Activated naive CD4-positive, alpha-beta T cell treated with anti-CD3 and anti-CD28 coated beads for 36 hours (primary cell): ENCODE measurements at regions of chrX and their contacts with region 1.

Region 1: DNA sequence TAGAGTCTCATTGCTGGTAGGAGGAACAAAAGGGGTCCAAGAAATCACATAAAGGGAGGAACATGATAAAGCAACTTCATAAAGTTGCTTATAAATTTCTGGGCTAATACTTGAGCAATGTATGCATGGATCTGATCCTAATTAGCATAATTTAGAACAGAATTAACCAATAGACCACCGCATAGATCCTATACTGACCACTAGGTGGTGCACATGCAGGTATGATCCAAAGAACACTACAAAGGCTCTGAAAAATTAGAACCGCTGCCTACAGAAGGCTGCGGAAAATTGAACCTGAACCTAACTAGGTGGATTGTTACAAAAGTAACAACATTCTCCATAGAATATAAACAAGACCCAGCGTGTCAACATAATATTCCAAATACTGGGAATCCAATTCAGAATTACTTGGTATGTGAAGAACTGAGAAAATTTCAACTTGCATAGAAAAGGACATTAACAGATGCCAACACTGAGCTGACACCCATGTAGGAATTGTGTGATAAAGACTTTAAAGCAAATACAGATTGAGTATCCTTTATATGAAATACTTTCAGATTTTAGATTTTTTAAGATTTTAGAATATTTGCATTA is 23.3 kb downstream of the BRCC3 start:
- DNase-seq: peak; percentile 32
- H3K4me3 Mint-ChIP-seq: no peak overlapping the region
- H3K27ac Mint-ChIP-seq: no peak overlapping the region
- H3K4me1 Mint-ChIP-seq: no peaks in the 10 kb centered on the region
- H3K27me3 Mint-ChIP-seq: no peaks in the 10 kb centered on the region

Region 2: GRCh38 chrX:155132110-155132509 is 37.5 kb after region 1 on chrX:
- CTCF ChIA-PET with region 1: no interaction called
- intact Hi-C with region 1: no loop called
- DNase-seq: no peak
- H3K4me3 Mint-ChIP-seq: no peak overlapping the region
- H3K27ac Mint-ChIP-seq: no peak overlapping the region
- H3K4me1 Mint-ChIP-seq: no peaks in the 10 kb centered on the region
- H3K27me3 Mint-ChIP-seq: no peaks in the 10 kb centered on the region

Region 3: GRCh38 chrX:155148724-155149537 is 54.4 kb after region 1 on chrX:
- CTCF ChIA-PET with region 1: interaction called, 4 read pairs
- intact Hi-C with region 1: loop called (anchors 1 kb)
- DNase-seq: peak; percentile 61
- H3K4me3 Mint-ChIP-seq: no peak overlapping the region
- H3K27ac Mint-ChIP-seq: no peak overlapping the region
- H3K4me1 Mint-ChIP-seq: peaks cover 2% of the 10 kb centered on the region
- H3K27me3 Mint-ChIP-seq: no peaks in the 10 kb centered on the region

Region 4: DNA sequence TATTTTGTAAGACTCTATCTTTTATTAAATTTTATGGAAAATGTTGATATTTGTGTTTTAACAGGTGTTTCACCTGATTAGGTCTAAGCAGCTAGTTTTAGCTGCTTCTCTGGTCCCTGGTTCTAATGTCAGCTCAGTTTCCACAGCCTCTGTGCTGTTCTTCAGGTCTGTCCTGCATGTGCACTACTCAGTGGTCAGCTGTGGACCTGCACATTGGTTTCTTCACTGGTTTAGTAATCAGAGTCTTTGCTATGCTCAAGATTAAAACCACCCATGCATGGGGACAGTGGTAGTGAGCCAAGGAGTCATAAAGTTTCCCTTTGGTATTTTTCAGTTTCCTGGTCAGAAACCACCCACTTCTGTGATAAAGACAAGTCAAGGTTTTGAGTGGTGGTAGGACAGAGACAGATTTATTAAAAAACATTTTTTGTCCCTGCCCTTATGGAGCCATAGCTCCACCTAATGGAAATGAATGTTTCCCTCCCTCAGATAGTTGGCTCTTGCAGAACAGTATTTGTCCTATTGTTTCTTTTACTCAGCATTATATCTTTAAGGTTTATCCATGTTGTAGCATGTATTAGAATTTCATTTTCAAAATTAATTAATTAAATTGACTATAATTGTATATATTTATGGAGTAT is 84.9 kb after region 1 on chrX:
- CTCF ChIA-PET with region 1: no interaction called
- intact Hi-C with region 1: loop called (anchors 1 kb)
- DNase-seq: no peak
- H3K4me3 Mint-ChIP-seq: no peak overlapping the region
- H3K27ac Mint-ChIP-seq: no peak overlapping the region
- H3K4me1 Mint-ChIP-seq: peaks cover 1% of the 10 kb centered on the region
- H3K27me3 Mint-ChIP-seq: no peaks in the 10 kb centered on the region

Region 5: DNA sequence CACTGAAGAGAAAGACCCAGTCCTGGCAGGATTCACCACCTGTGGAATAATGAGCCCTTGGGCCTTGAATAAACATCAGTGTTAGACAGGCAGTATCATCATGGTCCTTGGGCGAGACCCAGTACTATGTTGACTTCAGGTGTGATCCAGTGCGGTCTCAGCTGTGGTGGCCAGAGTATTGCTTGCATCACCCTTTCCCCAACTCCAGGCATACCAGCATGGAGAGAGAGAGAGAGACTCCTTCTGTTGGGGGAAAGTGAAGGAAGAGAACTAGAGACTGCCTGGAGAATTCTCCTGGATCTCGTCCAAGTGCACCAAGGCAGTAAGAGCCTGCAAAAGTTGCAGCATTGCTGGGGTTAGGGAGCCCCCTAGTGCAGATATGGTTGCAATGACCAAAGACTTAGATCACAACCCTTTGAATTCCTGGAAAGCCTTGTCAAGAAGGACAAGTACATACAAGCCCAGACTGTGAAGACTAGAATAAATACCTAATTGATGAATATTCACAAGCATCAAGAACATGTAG is 725.5 kb after region 1 on chrX:
- CTCF ChIA-PET with region 1: no interaction called
- intact Hi-C with region 1: loop called (anchors 2 kb)
- DNase-seq: peak; percentile 66
- H3K4me3 Mint-ChIP-seq: no peak overlapping the region
- H3K27ac Mint-ChIP-seq: no peak overlapping the region
- H3K4me1 Mint-ChIP-seq: no peaks in the 10 kb centered on the region
- H3K27me3 Mint-ChIP-seq: peaks cover 12% of the 10 kb centered on the region